ENCODE measurements at regions of chr21 and their contacts with region 1.

Region 1: DNA sequence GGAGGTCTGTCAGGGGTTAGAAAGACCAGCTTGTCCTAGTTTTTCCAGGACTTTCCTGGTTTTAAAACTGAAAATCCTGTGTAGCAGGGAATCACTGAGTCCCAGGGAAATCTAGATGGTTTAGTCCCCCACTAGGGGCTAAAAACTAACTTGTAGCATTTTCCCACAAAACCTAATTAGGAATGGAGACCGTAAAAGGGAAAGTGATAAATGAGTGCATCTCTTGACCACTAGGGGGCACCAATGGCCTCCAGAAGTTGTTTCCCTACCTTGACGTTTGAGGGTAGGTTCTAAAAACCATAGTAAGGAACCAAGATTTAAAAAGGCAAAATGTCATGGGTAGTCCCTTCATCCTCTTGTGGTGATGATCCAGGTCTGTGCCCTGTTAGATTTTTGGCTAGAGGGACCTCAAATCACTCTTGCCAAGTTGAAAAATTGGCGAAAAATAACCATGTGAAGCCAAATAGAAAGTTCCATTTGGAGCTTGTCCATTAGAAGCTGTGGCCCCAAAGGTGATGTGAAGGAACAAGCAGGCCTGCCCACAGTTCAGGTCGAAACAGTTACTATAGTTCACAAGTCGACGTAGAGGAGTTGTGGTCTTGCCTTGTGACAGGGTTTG is 24.5 kb downstream of the CLIC6 start:
- DNase-seq: no peak
- H3K4me3 ChIP-seq: no peak overlapping the region
- H3K27me3 ChIP-seq: peaks cover 4% of the 10 kb centered on the region
- CTCF ChIP-seq: peak; percentile 81

Region 2: GRCh38 chr21:34372321-34372720 is 321.0 kb before region 1 on chr21:
- CTCF ChIA-PET with region 1: no interaction called
- POLR2A ChIA-PET with region 1: no interaction called
- DNase-seq: no peak
- H3K4me3 ChIP-seq: no peak overlapping the region
- H3K27me3 ChIP-seq: no peaks in the 10 kb centered on the region; the same call in 1 of the 2 replicates
- CTCF ChIP-seq: no peak

Region 3: DNA sequence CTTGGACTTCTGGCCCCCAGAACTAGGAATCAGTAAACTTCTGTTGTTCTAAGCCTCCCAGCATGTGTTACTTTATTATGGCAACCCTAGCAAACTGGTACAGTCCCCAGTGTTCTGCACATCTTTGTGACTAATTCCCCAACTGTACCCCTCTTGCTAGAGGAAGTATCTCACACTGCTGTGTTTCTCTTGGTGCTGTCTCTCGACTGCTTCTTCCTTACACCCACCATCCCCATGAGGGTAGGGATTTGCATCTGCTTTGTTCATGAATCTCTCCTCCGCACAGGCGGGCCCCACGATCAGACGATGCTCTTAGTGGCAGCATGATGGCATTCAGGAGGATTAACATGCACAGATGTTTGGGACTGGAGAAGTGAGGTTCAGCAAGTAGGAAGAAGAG is 22.2 kb after region 1 on chr21:
- CTCF ChIA-PET with region 1: no interaction called
- POLR2A ChIA-PET with region 1: no interaction called
- DNase-seq: no peak
- H3K4me3 ChIP-seq: no peak overlapping the region
- H3K27me3 ChIP-seq: no peaks in the 10 kb centered on the region
- CTCF ChIP-seq: no peak

Region 4: DNA sequence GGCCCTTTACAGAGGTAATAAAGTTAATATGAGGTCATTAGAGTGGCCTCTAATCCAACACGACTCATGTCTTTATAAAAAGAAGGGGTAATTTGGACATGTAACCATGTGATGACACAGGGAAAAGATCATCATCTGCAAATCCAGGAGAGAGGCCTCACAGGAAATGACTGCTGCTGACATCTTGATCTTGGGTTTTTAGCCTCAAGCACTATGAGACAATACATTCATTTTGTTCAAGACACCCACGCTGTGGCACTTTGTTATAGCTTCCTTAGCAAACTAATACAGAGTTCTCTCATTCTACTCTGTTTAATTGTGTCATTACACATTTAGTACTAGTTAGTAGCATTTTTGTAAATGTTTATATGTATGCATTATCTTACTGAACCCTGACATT is 419.8 kb after region 1 on chr21:
- CTCF ChIA-PET with region 1: no interaction called
- POLR2A ChIA-PET with region 1: no interaction called
- DNase-seq: no peak
- H3K4me3 ChIP-seq: no peak overlapping the region
- H3K27me3 ChIP-seq: no peaks in the 10 kb centered on the region
- CTCF ChIP-seq: no peak

Region 5: DNA sequence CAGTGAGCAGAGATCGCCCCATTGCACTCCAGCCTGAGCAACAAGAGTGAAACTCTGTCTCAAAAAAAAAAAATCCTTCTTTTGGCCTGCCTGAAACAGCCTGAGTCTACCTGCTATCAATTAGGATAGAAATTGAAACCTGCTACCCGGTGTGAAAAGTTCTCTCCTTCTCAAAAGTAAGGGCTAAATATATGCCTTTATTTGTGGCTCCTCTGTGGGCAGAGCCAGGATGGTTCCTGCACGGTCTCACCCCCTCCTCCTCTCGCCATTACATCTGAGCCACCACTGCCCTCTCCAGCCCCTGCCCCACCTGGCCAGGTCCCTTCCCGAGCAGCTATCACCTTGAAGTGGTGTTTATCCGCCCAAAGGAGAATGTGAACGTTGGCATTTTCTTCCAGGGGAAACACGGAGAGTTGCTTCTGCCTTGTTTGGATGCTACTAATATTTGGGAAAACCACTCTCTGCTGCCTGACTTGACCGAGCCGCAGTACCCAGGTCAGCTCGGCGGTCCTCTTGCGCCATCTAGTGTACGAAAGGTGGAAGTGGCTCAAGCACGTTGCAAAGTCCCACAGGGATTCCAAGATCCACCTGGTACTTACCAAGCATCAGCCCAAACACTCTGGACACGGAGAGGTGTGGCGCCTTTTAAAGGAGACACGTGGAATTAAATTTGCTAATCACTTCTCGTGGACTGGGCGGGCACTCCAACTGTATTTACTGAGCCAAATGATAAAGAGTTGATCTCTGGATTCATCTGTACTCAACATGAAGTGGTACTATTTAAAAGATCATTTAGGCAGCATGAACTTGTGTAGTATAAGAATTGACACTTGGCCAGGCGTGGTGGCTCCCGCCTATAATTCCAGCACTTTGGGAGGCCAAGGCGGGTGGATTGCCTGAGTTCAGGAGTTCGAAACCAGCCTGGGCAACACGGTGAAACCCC is 1335.1 kb after region 1 on chr21:
- CTCF ChIA-PET with region 1: interaction called, 10 read pairs
- POLR2A ChIA-PET with region 1: no interaction called
- DNase-seq: no peak
- H3K4me3 ChIP-seq: no peak overlapping the region
- H3K27me3 ChIP-seq: no peaks in the 10 kb centered on the region
- CTCF ChIP-seq: peak; percentile 94